ENCODE measurements at regions of chr1 and their contacts with region 1.

Region 1: DNA sequence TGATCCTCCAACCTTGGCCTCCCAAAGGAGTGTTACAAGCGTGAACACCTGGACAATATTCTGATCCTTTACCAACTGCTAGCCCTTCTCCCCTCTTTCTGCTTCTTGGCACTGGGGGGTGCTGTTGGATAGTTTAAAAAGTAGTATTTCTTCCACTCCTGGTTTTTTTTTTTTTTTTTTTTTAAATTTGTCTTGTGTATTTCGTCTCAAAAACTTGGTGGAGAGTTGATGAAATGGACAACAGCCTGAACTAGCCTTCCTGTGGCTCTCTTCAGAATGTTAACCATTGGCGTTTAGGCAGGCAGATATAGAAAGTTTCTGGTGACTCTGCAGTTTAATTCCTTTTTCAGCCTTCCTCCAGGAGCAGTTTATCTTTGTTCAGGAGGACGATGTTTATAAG is 69.7 kb upstream of the USP24 start:
- DNase-seq: no peak
- ATAC-seq: peak; percentile 78

Region 2: GRCh38 chr1:56584910-56585528 is 1300.2 kb after region 1 on chr1:
- intact Hi-C with region 1: loop called (anchors 5 kb)
- DNase-seq: no peak
- ATAC-seq: peak; percentile 82

Region 3: DNA sequence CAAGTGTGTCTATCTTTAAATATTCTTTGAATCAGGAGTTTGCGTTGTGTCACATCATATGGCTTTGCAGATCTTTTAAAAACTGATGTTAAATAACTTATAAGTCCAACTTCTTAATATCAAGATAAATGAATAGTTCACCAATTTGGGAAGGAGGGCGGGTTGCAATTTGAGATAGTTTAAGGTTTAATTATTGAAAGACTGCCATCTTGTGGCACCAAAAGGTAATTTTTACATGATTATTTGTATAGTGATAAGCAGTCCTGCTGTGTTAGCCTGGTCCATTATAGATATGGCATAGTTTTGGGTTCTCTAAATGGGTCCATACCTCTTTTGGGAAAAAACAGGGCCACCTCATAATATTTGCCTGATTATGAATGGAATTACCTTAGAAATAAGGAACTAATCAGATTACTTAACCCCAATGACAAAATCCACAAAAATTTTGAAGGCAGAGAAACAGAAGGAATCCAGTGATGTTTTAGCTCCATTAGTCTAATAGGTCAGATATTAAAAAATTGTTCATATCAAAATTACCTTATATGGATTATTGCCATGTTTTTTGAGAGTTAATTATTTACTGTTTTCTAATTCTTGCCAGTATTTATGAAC is 1424.5 kb after region 1 on chr1:
- intact Hi-C with region 1: loop called (anchors 10 kb)
- DNase-seq: no peak
- ATAC-seq: peak; percentile 65

Measured in sciatic nerve (tissue), 2 donors.